CD14-positive monocyte (primary cell): ENCODE measurements at regions of chr22 and their contacts with region 1.

Region 1: GRCh38 chr22:39532215-39533071 is at the start of gene RPS19BP1:
- DNase-seq: peak; percentile 96 to 98 (median 96)
- H3K4me3 ChIP-seq: peak within 1 kb of the TSS; percentile 77 to 90 (median 81)
- H3K4me3 Mint-ChIP-seq: peak within 1 kb of the TSS; percentile 85 to 94
- H3K27ac ChIP-seq: peak within 1 kb of the TSS; percentile 75 to 85
- H3K27ac Mint-ChIP-seq: peak within 1 kb of the TSS; percentile 85 to 94 (median 90)
- H3K4me1 ChIP-seq: peaks cover 48 to 61% of the 10 kb centered on the region in 2 donors
- H3K4me1 Mint-ChIP-seq: peaks cover 51% of the 10 kb centered on the region
- H3K27me3 ChIP-seq: no peaks in the 10 kb centered on the region
- H3K27me3 Mint-ChIP-seq: peaks cover 0 to 3% (median 2%) of the 10 kb centered on the region in 3 donors
- CTCF ChIP-seq: no peak
- polyA plus RNA-seq, gene RPS19BP1: 59.9 to 106 (median 73.5) TPM

Region 2: DNA sequence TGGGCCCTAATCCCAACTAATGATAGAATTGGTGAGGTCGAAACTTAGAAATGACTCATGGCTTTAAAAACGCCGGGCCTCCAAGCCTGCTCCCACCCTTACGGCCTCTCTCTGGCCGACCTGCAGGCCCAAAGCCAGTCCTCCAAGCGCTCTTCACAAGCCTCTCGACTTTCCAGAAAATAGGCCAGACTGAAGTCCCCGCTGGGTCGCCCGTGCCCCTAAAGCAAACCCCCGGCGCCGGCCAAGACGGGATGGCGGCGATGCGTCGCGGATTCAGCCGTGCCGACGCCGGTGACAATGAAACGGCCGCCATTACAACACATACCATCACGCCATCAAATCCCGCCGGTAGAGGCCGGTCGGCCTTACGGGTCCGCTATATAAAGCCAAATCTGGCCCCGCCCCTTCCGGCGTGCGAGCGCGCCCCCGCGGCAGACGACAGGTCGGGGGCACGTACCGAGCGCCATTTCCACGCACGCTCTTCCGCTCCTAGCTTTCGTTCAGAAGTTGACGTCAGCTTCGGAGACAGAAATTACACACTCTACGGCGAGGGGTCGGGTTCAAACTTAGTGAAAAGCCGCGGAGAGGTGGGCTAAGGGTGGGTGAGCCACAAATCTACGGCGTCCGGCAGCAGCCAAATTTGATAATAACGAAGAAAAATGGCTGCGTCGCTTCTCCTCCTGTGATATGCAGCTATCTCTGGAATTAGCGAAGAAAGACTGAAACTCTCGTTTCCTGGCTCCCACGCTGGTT is 213.0 kb before region 1 on chr22 and contains the start of gene RPL3:
- intact Hi-C with region 1: loop called in 1 of 2 experiments (anchors 5 kb)
- DNase-seq: peak; percentile 95 to 99 (median 98)
- H3K4me3 ChIP-seq: peak within 1 kb of the TSS; percentile 80 to 95 (median 93)
- H3K4me3 Mint-ChIP-seq: peak within 1 kb of the TSS; percentile 98 to 99
- H3K27ac ChIP-seq: peak within 1 kb of the TSS; percentile 94 to 96
- H3K27ac Mint-ChIP-seq: peak within 1 kb of the TSS; percentile 95 to 99 (median 99)
- H3K4me1 ChIP-seq: peaks cover 26 to 42% of the 10 kb centered on the region in 2 donors
- H3K4me1 Mint-ChIP-seq: peaks cover 37% of the 10 kb centered on the region
- H3K27me3 ChIP-seq: no peaks in the 10 kb centered on the region
- H3K27me3 Mint-ChIP-seq: peaks cover 0 to 3% (median 2%) of the 10 kb centered on the region in 3 donors
- CTCF ChIP-seq: no peak
- polyA plus RNA-seq, gene RPL3: 604 to 2,104 (median 698) TPM

Region 3: DNA sequence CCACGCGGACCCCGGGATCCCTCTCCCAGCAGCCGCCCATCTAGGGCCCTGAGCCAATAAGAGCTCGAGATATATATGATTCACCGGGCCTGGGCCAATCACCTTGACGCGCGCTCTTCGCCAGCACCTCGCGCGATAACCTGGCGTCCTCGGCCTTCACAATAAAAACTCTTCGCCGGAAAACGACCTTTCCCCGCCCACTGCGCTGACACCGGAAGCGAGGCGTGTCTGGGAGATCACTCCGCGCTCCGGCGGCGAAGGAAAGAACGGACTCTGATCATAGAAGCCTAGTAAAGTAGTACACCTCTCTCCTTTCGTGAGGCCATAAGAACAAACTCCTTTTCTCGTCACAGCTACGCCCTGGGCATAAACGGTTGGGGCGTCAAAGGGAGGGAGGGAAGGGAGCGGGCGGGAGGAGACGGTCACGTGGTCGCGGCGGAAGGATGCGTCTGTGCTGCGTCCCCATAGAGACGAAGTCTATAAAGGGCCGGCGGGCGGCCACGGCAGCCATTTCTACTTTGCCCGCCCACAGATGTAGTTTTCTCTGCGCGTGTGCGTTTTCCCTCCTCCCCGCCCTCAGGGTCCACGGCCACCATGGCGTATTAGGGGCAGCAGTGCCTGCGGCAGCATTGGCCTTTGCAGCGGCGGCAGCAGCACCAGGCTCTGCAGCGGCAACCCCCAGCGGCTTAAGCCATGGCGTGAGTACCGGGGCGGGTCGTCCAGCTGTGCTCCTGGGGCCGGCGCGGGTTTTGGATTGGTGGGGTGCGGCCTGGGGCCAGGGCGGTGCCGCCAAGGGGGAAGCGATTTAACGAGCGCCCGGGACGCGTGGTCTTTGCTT is 12.2 kb before region 1 on chr22 and contains the start of gene ATF4:
- intact Hi-C with region 1: loop called in 1 of 2 experiments (anchors 2 kb)
- DNase-seq: peak; percentile 98 to 99 (median 99)
- H3K4me3 ChIP-seq: peak within 1 kb of the TSS; percentile 88 to 98 (median 96)
- H3K4me3 Mint-ChIP-seq: peak within 1 kb of the TSS; percentile 90 to 92
- H3K27ac ChIP-seq: peak within 1 kb of the TSS; percentile 95 to 96
- H3K27ac Mint-ChIP-seq: peak within 1 kb of the TSS; percentile 97 to 100 (median 99)
- H3K4me1 ChIP-seq: peaks cover 52 to 57% of the 10 kb centered on the region in 2 donors
- H3K4me1 Mint-ChIP-seq: peaks cover 54% of the 10 kb centered on the region
- H3K27me3 ChIP-seq: no peaks in the 10 kb centered on the region
- H3K27me3 Mint-ChIP-seq: peaks cover 0 to 7% (median 0%) of the 10 kb centered on the region in 3 donors
- CTCF ChIP-seq: no peak
- polyA plus RNA-seq, gene ATF4: 55.1 to 606 (median 59.0) TPM

Region 4: GRCh38 chr22:40031766-40032470 is 499.5 kb after region 1 on chr22:
- intact Hi-C with region 1: loop called in 1 of 2 experiments (anchors 5 kb)
- DNase-seq: no peak
- H3K4me3 ChIP-seq: no peak overlapping the region
- H3K4me3 Mint-ChIP-seq: no peak overlapping the region
- H3K27ac ChIP-seq: no peak overlapping the region
- H3K27ac Mint-ChIP-seq: no peak overlapping the region
- H3K4me1 ChIP-seq: no peaks in the 10 kb centered on the region
- H3K4me1 Mint-ChIP-seq: peaks cover 3% of the 10 kb centered on the region
- H3K27me3 ChIP-seq: no peaks in the 10 kb centered on the region
- H3K27me3 Mint-ChIP-seq: peaks cover 1 to 6% (median 2%) of the 10 kb centered on the region in 3 donors
- CTCF ChIP-seq: no peak

Region 5: GRCh38 chr22:40346178-40347118 is 814.0 kb after region 1 on chr22 and contains the start of gene ADSL:
- intact Hi-C with region 1: loop called in 1 of 2 experiments (anchors 2 kb)
- DNase-seq: peak; percentile 71 to 78 (median 72)
- H3K4me3 ChIP-seq: peak within 1 kb of the TSS; percentile 78 to 89 (median 86)
- H3K4me3 Mint-ChIP-seq: peak within 1 kb of the TSS; percentile 94 to 97
- H3K27ac ChIP-seq: peak within 1 kb of the TSS; percentile 71 to 83
- H3K27ac Mint-ChIP-seq: peak within 1 kb of the TSS; percentile 89 to 97 (median 95)
- H3K4me1 ChIP-seq: peaks cover 25 to 40% of the 10 kb centered on the region in 2 donors
- H3K4me1 Mint-ChIP-seq: peaks cover 39% of the 10 kb centered on the region
- H3K27me3 ChIP-seq: no peaks in the 10 kb centered on the region
- H3K27me3 Mint-ChIP-seq: peaks cover 0 to 4% (median 3%) of the 10 kb centered on the region in 3 donors
- CTCF ChIP-seq: no peak
- polyA plus RNA-seq, gene ADSL: 56.7 to 82.3 (median 65.1) TPM

Region 6: DNA sequence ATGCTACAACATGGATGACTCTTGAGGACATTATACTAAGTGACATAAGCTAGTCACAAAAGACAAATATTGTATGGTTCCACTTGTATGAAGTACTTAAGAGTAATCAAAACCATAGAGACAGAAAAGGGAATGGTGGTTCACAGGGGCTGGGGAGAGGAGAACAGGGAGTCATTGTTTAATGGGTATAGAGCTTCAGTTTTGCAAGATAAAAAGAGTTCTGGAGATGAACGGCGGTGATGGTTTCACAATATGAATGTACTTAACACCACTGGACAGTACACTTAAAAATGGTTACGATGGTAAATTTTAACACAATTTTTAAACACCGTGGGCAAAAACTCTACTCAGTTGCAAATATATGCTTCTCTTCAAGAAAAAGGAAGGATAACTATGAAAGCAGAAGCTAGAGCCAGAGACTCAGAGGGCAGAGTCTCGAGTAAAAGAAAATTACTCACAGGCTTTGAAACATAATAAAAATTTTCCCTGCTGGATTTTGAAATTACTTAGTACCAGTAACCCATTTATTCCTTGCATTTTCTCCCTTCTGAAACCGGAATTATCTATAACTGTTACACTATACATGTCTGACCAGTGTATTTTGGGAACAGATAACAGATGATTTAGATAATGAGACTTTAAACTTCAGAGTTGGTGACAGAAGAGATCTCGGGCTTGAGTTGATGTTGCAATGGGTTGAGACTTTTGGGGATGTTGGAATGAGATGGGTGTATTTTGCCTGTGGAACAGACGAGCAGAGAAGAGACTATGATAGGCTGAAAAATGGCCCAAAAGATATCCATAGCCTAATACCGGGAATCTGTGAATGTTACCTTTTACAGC is 1089.1 kb after region 1 on chr22:
- intact Hi-C with region 1: no loop called
- DNase-seq: peak; percentile 39 to 69 (median 62)
- H3K4me3 ChIP-seq: peak overlapping the region in 2 of 3 experiments; percentile 18 to 42
- H3K4me3 Mint-ChIP-seq: peak overlapping the region; percentile 65 to 67
- H3K27ac ChIP-seq: peak overlapping the region; percentile 50 to 84
- H3K27ac Mint-ChIP-seq: peak overlapping the region; percentile 87 to 94 (median 90)
- H3K4me1 ChIP-seq: peaks cover 26 to 32% of the 10 kb centered on the region in 2 donors
- H3K4me1 Mint-ChIP-seq: peaks cover 37% of the 10 kb centered on the region
- H3K27me3 ChIP-seq: no peaks in the 10 kb centered on the region
- H3K27me3 Mint-ChIP-seq: no peaks in the 10 kb centered on the region
- CTCF ChIP-seq: no peak